ENCODE measurements at regions of chr1 and their contacts with region 1.

Region 1: GRCh38 chr1:112674439-112674985 is at the start of gene MOV10:
- DNase-seq: peak; percentile 79
- H3K4me3 Mint-ChIP-seq: peak within 1 kb of the TSS; percentile 97
- H3K27ac Mint-ChIP-seq: peak within 1 kb of the TSS; percentile 95
- H3K4me1 Mint-ChIP-seq: peaks cover 34% of the 10 kb centered on the region
- H3K27me3 Mint-ChIP-seq: peaks cover 5% of the 10 kb centered on the region

Region 2: GRCh38 chr1:112660072-112660471 is 14.4 kb before region 1 on chr1:
- CTCF ChIA-PET with region 1: interaction called, 17 read pairs
- DNase-seq: no peak
- H3K4me3 Mint-ChIP-seq: no peak overlapping the region
- H3K27ac Mint-ChIP-seq: no peak overlapping the region
- H3K4me1 Mint-ChIP-seq: peaks cover 7% of the 10 kb centered on the region
- H3K27me3 Mint-ChIP-seq: no peaks in the 10 kb centered on the region

Region 3: DNA sequence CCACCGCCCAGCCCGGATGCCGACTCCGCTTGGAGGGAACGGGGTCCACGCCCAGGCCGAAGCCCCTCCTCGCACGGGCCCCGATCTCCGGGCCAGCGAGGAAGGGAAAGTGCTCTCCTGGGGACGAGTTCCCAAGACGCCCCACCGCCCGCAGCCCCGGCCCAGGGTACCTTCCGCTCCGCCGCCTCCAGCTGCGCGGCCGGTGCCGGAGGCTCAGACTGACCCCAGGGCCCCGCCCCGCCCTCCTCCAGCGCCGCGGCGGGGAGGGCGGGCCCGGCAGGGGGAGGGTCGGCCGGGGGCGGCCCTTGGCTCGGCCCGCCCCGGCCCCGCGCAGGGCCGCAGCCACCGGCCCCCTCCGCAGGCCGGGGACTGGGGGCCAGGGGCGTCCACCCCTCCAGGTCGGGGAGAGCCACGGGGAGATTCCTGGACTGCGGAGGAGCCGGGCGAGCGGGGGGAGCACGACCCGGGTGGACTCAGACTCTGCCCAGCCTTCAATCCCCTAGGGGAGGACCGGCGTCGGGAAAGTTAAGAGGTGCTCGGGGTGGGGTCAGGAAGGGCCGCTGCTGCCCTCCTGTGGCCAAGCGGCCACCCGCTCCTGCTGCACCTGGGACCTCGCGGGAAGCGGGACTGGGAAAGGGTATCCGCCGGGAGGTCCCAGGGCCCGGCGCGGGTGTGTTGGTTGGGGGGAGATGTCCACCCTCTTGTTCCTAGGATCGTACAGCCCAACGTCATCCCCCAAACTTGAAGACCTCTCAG is 32.6 kb after region 1 on chr1 and contains the start of gene RHOC:
- CTCF ChIA-PET with region 1: interaction called, 10 read pairs
- DNase-seq: peak; percentile 73
- H3K4me3 Mint-ChIP-seq: peak within 1 kb of the TSS; percentile 81
- H3K27ac Mint-ChIP-seq: no peak within 1 kb of the TSS
- H3K4me1 Mint-ChIP-seq: peaks cover 45% of the 10 kb centered on the region
- H3K27me3 Mint-ChIP-seq: peaks cover 49% of the 10 kb centered on the region

Measured in activated naive CD4-positive, alpha-beta T cell treated with anti-CD3 and anti-CD28 coated beads, Interleukin-2, amount 10 ng/mL, durations not matched to agents 7 days and 5 days (primary cell).